Ascending aorta (tissue), 2 donors: ENCODE measurements at regions of chr16 and their contacts with region 1.

Region 1: GRCh38 chr16:86498661-86499439 is 11.5 kb upstream of the FOXF1 start:
- DNase-seq: no peak
- H3K4me3 ChIP-seq: no peak overlapping the region
- H3K27ac ChIP-seq: no peak overlapping the region
- H3K4me1 ChIP-seq: peaks cover 0 to 4% of the 10 kb centered on the region in 2 donors
- H3K27me3 ChIP-seq: peaks cover 29% of the 10 kb centered on the region
- CTCF ChIP-seq: no peak

Region 2: DNA sequence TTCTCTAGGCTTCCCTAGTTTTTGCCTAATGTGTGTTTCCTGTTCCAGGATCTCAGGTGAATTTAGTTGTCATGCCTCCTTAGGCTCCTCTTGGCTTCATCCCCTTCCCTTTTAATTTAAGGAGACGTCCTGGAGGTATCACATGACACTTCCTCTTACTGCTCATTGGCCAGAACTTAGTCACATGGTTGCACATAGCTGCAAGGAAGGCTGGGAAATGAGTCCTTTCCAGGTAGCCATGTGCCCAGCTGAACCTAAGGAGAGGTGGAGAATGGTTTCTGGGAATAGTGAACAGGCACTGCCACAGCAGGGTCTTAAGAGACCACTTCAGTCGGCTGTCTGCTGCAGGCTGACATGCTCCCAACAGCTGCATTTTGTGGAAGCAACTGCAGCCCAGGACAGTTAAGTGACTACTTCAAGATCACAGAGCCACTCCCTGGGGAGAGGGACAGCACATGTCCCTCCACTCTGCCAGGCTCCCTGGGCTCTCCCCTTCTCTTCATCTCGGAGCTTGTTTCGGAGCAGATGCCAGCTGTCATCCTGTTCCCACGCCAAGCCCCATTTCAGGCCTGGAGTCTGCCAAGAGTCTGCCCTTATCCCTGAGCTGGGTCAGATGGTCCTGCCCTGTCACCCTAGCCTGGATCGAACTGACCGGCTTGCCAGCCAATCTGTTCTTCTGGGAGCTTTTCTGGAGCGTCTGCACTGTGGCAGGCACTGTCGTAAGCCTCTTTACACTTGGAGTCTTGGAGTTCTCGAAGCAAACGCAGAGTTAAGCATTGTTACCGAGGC is 69.9 kb before region 1 on chr16:
- intact Hi-C with region 1: loop called (anchors 2 kb)
- DNase-seq: no peak
- H3K4me3 ChIP-seq: no peak overlapping the region
- H3K27ac ChIP-seq: no peak overlapping the region
- H3K4me1 ChIP-seq: no peaks in the 10 kb centered on the region
- H3K27me3 ChIP-seq: no peaks in the 10 kb centered on the region
- CTCF ChIP-seq: no peak

Region 3: GRCh38 chr16:87790278-87791032 is 1291.6 kb after region 1 on chr16:
- intact Hi-C with region 1: no loop called
- DNase-seq: no peak
- H3K4me3 ChIP-seq: no peak overlapping the region
- H3K27ac ChIP-seq: no peak overlapping the region
- H3K4me1 ChIP-seq: no peaks in the 10 kb centered on the region
- H3K27me3 ChIP-seq: no peaks in the 10 kb centered on the region
- CTCF ChIP-seq: no peak